Activated CD4-positive, alpha-beta T cell treated with anti-CD3 and anti-CD28 coated beads, Interleukin-2, amount 10 ng/mL, durations not matched to agents 24 days and 14 days (primary cell): ENCODE measurements at regions of chr16 and their contacts with region 1.

Region 1: DNA sequence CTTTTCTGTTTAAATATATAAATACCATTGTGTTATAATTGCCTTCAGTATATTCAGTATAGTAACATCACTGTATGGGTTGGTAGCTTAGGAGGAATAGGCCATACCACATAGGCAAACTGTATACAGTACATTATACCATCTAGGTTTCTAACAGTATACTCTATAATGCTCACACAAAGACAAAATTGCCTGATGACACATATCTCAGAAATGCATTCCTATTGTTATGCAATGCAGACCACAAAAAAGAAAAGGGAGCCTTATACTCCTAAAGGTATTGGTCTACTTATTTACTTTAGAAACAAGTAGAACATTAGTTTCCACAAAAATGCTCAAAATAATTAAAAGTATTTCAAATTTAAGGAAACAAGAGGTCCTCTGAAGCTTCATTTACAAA is 47.9 kb downstream of the SETD6 start:
- DNase-seq: no peak
- H3K4me3 Mint-ChIP-seq: no peak overlapping the region
- H3K27ac Mint-ChIP-seq: no peak overlapping the region
- H3K4me1 Mint-ChIP-seq: no peaks in the 10 kb centered on the region
- H3K27me3 Mint-ChIP-seq: no peaks in the 10 kb centered on the region

Region 2: DNA sequence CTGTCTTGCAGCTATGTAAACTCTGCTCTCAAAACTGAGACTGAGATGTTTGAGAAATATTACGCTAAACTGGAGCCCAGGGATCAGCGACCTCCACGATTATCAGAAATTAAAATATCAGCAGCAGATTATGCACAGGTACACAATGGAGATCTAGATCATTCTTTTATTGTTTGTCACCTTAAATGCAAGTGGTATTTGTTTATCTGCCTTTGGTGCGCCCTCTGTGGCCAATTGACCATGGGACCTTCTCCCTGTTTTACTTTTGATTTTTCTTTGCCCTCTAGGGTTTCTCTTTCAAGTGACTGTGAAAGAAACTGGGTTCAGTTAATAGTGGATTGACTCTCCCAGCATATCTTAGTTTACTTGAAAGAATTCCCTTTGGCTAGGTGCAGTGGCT is 310.5 kb before region 1 on chr16:
- intact Hi-C with region 1: no loop called
- DNase-seq: no peak
- H3K4me3 Mint-ChIP-seq: no peak overlapping the region
- H3K27ac Mint-ChIP-seq: no peak overlapping the region
- H3K4me1 Mint-ChIP-seq: peaks cover 8% of the 10 kb centered on the region
- H3K27me3 Mint-ChIP-seq: peaks cover 7% of the 10 kb centered on the region

Region 3: DNA sequence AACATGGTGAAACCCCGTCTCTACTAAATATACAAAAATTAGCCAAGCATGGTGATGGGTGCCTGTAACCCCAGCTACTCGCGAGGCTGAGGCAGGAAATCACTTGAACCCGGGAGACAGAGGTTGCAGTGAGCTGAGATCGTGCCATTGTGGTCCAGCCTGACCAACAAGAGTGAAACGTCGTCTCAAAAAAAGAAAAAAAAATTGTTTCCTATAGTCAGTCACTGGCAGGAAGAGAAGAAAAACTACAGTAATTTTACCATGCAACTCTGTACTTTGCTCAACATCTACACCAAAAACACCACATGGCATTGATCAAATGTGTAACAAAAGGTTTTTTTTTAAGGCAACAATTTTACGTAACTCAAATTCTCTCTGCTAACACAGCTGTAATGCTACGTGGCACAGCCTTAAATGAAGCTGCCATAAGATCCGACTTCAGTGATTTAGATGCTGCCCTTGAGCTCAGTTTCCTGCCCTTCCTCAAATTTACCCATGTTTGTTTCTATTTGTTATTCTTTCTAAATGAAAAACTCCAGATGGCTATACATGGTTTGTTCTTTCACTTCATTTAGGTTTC is 26.2 kb after region 1 on chr16:
- intact Hi-C with region 1: no loop called
- DNase-seq: no peak
- H3K4me3 Mint-ChIP-seq: no peak overlapping the region
- H3K27ac Mint-ChIP-seq: peak overlapping the region; percentile 7
- H3K4me1 Mint-ChIP-seq: peaks cover 12% of the 10 kb centered on the region
- H3K27me3 Mint-ChIP-seq: no peaks in the 10 kb centered on the region

Region 4: GRCh38 chr16:58605562-58605961 is 42.3 kb after region 1 on chr16:
- intact Hi-C with region 1: loop called (anchors 5 kb)
- DNase-seq: no peak
- H3K4me3 Mint-ChIP-seq: no peak overlapping the region
- H3K27ac Mint-ChIP-seq: no peak overlapping the region
- H3K4me1 Mint-ChIP-seq: peaks cover 16% of the 10 kb centered on the region
- H3K27me3 Mint-ChIP-seq: no peaks in the 10 kb centered on the region